ENCODE measurements at regions of chr3 and their contacts with region 1.

Region 1: DNA sequence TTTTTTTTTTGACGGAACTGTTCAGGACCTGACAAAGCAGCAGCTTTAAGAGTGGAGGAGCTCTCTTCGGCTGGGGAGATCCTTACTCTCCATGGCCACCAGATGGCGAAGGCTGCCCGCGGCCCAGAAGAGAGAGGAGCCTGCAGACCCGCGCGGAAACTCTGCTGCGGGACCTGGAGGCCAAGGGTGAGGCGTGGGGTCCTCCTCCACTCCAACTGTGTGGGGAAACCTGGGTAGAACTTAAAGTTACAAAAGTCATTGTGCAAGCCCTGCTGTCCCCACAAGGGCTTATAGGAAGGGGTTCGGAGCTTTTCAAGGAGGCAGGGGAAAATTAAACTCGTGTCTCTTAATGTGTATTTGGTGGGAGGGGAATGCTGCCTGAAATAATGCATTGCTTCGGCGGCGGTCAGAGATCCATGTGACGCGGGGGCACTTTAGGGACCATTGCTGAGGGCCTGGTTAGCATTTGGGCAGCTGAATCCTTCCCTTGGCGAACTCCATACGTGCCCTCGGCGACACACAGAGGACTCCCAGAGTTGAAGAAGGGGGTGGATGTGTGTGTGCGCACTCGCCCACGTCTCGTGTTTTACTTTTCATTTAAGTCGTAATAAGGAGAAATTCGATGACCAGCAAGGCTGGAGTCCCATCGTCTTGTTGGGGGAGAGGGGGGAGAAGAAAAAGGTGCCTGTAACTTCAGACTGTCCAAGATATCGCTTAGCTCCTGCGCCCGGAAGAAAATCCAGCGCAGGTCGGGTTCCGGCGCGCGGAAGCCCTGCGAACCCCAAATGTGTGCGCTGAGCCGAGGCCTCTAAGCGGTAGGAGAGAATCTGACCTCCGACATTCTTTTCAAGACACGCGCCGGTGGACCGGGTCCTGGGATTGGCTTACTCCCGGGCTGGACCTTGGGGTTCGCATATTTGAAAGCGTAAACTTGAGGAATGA is 9.7 kb downstream of the EOMES start:
- DNase-seq: peak; percentile 47 to 63
- H3K4me3 ChIP-seq: peak overlapping the region; percentile 68
- H3K27ac ChIP-seq: no peak overlapping the region
- H3K4me1 ChIP-seq: no peaks in the 10 kb centered on the region; the same call in 1 of the 2 replicates
- H3K27me3 ChIP-seq: peaks cover 23% of the 10 kb centered on the region
- CTCF ChIP-seq: peak; percentile 84

Region 2: GRCh38 chr3:26574766-26575165 is 1137.6 kb before region 1 on chr3:
- CTCF ChIA-PET with region 1: interaction called, 13 read pairs
- POLR2A ChIA-PET with region 1: no interaction called
- intact Hi-C with region 1: no loop called
- DNase-seq: no peak
- H3K4me3 ChIP-seq: no peak overlapping the region
- H3K27ac ChIP-seq: no peak overlapping the region
- H3K4me1 ChIP-seq: no peaks in the 10 kb centered on the region
- H3K27me3 ChIP-seq: no peaks in the 10 kb centered on the region
- CTCF ChIP-seq: no peak

Region 3: GRCh38 chr3:27632431-27633223 is 79.8 kb before region 1 on chr3:
- CTCF ChIA-PET with region 1: interaction called, 20 read pairs
- POLR2A ChIA-PET with region 1: no interaction called
- intact Hi-C with region 1: no loop called
- DNase-seq: peak; percentile 39 to 59
- H3K4me3 ChIP-seq: peak overlapping the region; percentile 61
- H3K27ac ChIP-seq: peak overlapping the region; percentile 41; the same call in 1 of the 2 replicates
- H3K4me1 ChIP-seq: peaks cover 24% of the 10 kb centered on the region
- H3K27me3 ChIP-seq: no peaks in the 10 kb centered on the region
- CTCF ChIP-seq: no peak

Region 4: GRCh38 chr3:28328188-28329151 is 616.1 kb after region 1 on chr3:
- CTCF ChIA-PET with region 1: interaction called, 14 read pairs
- POLR2A ChIA-PET with region 1: no interaction called
- intact Hi-C with region 1: loop called (anchors 2 kb)
- DNase-seq: no peak
- H3K4me3 ChIP-seq: no peak overlapping the region
- H3K27ac ChIP-seq: no peak overlapping the region
- H3K4me1 ChIP-seq: no peaks in the 10 kb centered on the region
- H3K27me3 ChIP-seq: no peaks in the 10 kb centered on the region
- CTCF ChIP-seq: peak; percentile 82

Region 5: DNA sequence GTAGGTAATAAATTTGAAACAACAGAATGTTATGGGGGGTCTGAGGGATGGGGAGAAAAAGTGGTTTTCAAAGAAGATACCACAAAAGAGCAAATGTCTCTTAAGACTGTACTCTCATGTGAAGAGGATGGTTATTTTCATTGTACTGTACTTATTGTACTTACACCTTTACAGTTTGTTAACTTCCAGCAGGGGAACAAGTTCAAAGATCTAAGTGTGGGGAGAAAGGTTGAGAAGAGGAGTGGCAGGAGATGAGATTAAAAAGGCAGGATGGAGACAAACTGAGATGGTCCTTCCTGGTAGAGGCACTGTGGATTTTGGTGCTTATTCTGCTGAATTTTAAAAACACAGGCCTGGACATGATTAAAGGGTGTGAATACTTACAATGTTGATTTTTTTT is 630.7 kb after region 1 on chr3:
- CTCF ChIA-PET with region 1: interaction called, 11 read pairs
- POLR2A ChIA-PET with region 1: no interaction called
- intact Hi-C with region 1: no loop called
- DNase-seq: no peak
- H3K4me3 ChIP-seq: no peak overlapping the region
- H3K27ac ChIP-seq: no peak overlapping the region
- H3K4me1 ChIP-seq: peaks cover 29% of the 10 kb centered on the region
- H3K27me3 ChIP-seq: no peaks in the 10 kb centered on the region
- CTCF ChIP-seq: no peak

Measured in PC-9 (cell line).